ENCODE measurements at regions of chr1 and their contacts with region 1.

Region 1: GRCh38 chr1:28886731-28887418 is 27.5 kb upstream of the EPB41 start:
- DNase-seq: peak; percentile 98
- H3K4me3 Mint-ChIP-seq: peak overlapping the region; percentile 89
- H3K27ac Mint-ChIP-seq: peak overlapping the region; percentile 92
- H3K4me1 Mint-ChIP-seq: peaks cover 50% of the 10 kb centered on the region
- H3K27me3 Mint-ChIP-seq: no peaks in the 10 kb centered on the region

Region 2: DNA sequence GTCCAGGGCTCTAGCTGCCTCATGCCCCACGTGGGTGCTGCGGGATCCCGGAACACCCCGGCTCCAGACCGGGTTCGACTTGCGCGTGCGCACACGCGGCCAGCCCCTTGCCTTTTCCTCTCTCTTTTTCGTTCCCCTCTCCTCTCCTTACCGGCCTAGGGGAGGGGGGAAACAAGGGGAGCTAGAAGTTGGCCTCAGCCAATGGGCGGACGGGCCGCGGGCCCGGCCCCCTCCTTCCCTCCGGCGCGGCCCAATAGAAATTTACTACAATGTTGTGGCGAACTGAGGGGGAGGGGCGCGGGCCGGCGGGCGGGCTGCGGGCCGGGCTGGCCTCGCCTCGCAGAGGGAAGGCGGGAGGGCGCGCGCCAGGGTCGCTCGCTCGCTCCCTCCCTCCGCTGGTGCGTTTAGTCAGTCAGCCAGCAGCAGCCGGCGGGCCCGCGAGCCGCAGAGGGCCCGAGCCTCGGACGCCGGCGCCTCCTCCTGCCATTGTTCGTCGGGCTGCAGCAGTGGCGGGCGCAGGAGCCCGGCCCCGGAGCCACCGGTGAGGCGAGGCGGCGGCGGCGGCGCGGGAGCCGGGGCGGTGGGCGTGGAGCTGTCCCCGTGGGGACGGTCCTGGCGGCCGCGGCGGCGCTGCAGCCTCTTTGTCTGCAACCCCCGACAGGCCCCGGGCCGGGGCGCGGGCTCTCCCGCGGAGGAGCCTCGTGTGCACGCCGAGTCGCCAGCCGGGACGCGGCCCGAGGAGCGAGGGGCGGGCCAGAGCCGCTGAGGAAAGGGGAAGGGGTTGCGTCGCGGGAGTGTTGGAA is 27.6 kb after region 1 on chr1 and contains the start of gene EPB41:
- intact Hi-C with region 1: loop called (anchors 1 kb)
- DNase-seq: peak; percentile 98
- H3K4me3 Mint-ChIP-seq: peak within 1 kb of the TSS; percentile 98
- H3K27ac Mint-ChIP-seq: peak within 1 kb of the TSS; percentile 97
- H3K4me1 Mint-ChIP-seq: peaks cover 43% of the 10 kb centered on the region
- H3K27me3 Mint-ChIP-seq: no peaks in the 10 kb centered on the region
- total RNA-seq, gene EPB41: 79.1 and 79.7 TPM in 2 replicates

Region 3: DNA sequence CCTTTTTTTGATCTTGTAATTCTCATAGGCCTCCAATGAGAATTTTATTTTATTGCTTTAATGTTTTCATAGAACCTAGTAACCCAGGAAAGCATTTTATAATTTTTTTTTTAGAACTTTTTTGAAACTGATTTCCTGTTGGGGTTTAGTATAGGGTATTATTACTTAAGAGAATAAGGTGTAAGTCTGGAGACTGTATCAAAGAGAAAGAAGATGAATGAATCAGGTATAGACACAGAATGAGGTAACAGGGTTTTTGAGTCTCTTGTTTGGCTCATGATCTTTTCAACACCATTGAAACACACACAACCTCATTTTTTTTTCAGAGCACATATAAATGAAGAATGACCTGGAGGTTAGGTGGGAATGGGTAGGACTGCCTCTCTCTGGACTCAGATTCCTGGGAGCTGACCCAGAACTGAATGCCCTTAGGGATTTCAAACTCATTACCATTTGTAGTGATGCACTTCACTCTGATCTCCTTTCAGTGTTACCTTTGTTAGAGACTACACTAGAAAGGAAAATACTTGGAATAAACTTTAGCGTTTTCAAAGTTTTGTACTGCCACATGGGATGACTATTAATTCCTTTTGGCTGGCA is 78.5 kb after region 1 on chr1:
- intact Hi-C with region 1: loop called (anchors 2 kb)
- DNase-seq: no peak
- H3K4me3 Mint-ChIP-seq: no peak overlapping the region
- H3K27ac Mint-ChIP-seq: no peak overlapping the region
- H3K4me1 Mint-ChIP-seq: peaks cover 30% of the 10 kb centered on the region
- H3K27me3 Mint-ChIP-seq: no peaks in the 10 kb centered on the region

Region 4: DNA sequence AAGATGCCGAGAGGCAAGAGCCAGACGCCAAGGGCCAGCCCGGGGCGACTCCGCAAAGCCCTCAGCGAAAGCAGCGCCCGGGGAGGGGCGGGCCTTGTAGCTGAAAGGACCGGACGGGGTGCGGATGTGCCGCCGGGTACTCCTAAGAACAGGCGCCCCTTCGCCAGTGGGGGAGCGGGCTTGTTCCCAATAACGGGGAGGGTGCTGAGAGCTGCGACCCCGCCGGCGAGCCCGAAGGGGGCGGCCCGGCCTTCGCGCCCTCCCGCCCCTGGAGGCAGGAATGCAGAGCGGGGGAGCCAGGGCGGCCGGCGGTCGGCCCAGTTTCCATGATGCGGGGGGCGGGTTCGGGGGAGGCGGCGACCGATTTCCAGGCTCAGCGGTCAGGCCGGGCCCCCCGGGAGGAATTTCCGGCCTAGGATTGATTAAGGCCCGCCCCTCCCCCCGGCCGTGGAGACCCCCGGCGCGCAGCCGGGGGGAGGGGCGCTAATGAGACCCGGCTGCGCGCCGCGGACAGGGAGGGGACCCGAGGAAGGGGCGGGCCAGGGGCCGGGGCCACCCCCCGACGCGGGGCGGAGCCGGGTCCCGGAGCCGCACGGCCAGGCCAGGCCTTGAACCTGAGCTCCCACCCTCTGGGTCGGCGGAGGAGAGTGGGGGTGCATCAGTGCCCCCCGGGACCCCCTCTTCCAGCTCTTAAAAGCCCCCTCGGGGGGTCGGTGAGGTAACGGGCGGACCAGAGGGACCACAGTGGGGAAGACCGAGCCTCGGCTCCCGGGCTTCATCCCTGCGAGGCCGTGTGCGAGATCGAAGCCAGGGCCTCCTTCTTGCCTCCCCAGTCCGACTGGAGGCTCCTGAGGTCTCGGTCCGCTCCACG is 237.7 kb after region 1 on chr1:
- intact Hi-C with region 1: loop called (anchors 2 kb)
- DNase-seq: peak; percentile 88
- H3K4me3 Mint-ChIP-seq: peak overlapping the region; percentile 82
- H3K27ac Mint-ChIP-seq: peak overlapping the region; percentile 29
- H3K4me1 Mint-ChIP-seq: peaks cover 6% of the 10 kb centered on the region
- H3K27me3 Mint-ChIP-seq: peaks cover 17% of the 10 kb centered on the region

Region 5: DNA sequence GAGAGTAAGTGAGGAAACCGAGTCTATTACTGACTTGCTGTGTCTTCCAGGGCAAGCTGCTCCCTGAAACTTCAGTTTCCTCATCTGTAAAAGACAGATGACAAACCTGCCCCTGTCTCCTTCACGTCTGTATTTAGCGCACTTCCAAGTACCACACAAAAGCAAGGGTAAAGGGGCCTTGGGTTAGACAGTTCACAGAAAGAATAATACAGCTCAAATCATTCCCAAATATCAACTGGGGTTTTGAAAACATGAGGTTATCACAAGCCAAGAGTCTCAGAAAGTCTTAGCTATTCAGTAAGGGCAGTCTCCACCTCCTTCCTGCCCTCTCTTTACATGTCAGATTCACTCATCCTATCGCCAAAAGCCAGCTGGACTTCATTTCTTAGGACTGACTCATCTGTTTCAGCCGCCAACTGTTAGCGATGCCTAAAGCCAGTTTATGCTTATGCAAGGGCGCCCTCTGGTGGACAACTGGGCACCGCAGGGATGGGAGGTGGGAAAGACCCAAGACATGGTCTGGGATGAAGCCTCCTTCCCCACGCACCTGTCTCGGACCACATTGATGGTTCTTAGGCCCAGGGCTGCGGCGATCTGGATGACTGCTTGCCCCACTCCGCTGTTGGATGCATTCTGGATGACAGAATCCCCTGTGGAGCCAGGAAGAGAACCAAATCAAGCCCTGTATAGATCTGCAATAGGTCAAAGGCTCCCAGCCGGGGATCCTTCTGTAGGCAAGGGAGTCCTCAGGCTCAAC is 315.9 kb after region 1 on chr1:
- intact Hi-C with region 1: loop called (anchors 1 kb)
- DNase-seq: peak; percentile 97
- H3K4me3 Mint-ChIP-seq: no peak overlapping the region
- H3K27ac Mint-ChIP-seq: peak overlapping the region; percentile 34
- H3K4me1 Mint-ChIP-seq: peaks cover 15% of the 10 kb centered on the region
- H3K27me3 Mint-ChIP-seq: no peaks in the 10 kb centered on the region